Activated T-helper 1 cell treated with anti-CD3 and anti-CD28 coated beads, Interleukin-12 subunit alpha, Interleukin-12 subunit beta, Interleukin-2, Interleukin-4 antibody, amounts not matched to agents 30 ng/mL and 10 ng/mL and 1 ng/mL, durations not matched to agents 14 hours and 24 hours and 36 hours (primary cell): ENCODE measurements at regions of chr19 and their contacts with region 1.

Region 1: DNA sequence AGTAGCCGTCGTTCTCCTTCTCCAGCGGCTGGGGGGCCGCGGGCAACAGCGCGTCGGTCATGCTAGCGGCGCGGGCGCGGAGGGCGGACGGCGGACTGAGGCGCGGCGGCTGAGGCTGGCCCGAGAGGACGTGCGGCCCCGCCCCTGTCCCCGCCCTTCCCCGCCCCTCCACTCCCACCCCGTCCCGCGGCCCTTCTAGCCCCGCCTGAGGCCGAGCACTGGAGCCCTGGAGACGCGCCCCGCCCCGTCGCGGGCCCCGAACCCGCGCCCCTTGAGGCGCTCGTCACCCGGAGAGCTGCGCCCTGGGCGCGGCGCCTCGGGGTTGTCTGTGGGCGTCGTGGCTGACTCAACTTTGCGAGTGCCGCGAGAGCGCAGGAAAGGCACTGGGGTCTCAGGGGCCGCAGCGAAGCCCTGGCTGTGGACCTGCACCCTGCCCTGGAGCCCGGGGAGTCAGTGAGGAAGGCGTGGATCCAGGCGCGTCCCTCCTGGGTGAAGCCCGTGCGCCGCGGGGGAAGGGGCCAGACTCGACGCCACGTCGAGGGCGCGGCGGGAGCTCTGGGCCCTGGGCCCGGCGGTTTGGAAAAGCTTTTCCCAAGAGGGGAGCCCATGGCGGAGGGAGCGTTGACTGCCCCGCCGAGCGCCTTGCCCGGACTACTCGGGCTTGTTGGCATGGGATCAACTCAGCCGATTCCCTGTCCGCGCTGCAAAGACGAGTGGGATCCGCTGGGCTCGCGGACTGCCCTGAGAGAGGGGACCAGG is at the start of gene RHPN2:
- DNase-seq: peak; percentile 25
- H3K4me3 Mint-ChIP-seq: peak within 1 kb of the TSS; percentile 65
- H3K27ac Mint-ChIP-seq: no peak within 1 kb of the TSS
- H3K4me1 Mint-ChIP-seq: no peaks in the 10 kb centered on the region
- H3K27me3 Mint-ChIP-seq: peaks cover 22% of the 10 kb centered on the region
- total RNA-seq, gene RHPN2: 2.5 and 2.6 TPM in 2 replicates

Region 2: GRCh38 chr19:33052352-33052972 is 12.5 kb before region 1 on chr19:
- intact Hi-C with region 1: no loop called
- DNase-seq: no peak
- H3K4me3 Mint-ChIP-seq: no peak overlapping the region
- H3K27ac Mint-ChIP-seq: no peak overlapping the region
- H3K4me1 Mint-ChIP-seq: no peaks in the 10 kb centered on the region
- H3K27me3 Mint-ChIP-seq: peaks cover 1% of the 10 kb centered on the region

Region 3: DNA sequence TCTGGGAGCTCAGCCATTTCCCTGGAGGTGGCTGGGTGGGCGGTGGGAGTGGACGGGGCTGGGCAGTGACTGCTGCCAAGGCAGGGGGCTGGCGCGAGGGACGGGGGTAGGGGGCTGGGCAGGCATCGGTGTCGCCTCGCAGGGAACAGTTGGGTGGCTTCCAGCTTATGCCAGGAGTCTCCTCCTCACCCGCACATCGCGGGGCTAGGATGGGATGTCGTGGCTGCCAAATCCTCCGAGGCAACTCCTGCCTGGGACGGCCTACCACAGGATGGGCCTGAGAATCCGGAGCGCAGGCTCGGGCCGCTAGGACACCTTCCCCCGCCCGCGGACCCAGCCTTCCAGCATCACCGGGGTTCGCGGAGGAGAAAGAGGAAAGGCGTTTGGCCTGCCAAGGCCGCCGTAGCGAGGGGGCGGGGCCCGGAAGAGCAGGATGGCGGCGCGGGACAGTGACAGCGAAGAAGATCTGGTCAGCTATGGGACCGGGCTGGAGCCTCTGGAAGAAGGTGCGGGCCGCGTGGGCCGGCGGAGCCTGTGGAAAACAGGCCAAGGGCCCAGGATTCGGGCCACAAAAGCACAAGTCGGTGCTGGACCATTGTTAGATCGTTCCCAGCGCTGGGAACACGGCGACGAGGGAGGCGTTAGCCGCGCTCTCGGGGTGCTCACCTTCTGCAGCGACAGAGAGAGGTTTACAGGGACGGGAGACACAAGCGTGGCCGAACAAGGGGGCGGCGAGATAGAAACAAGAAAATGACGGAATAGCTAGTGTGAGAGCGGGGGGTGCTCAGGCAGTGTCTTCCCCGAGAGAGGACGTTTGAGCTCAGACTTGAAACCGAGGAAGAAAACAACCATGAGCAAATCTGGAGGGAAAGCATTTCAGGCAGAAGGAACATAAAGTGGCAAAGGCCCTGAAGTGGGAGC is 16.1 kb after region 1 on chr19 and contains the start of gene GPATCH1:
- intact Hi-C with region 1: loop called (anchors 1 kb)
- DNase-seq: peak; percentile 85
- H3K4me3 Mint-ChIP-seq: peak within 1 kb of the TSS; percentile 98
- H3K27ac Mint-ChIP-seq: peak within 1 kb of the TSS; percentile 90
- H3K4me1 Mint-ChIP-seq: peaks cover 31% of the 10 kb centered on the region
- H3K27me3 Mint-ChIP-seq: no peaks in the 10 kb centered on the region
- total RNA-seq, gene GPATCH1: 11.1 and 13.5 TPM in 2 replicates